Activated T-helper 1 cell treated with anti-CD3 and anti-CD28 coated beads, Interleukin-12 subunit alpha, Interleukin-12 subunit beta, Interleukin-2, Interleukin-4 antibody, amounts not matched to agents 30 ng/mL and 10 ng/mL and 1 ng/mL, durations not matched to agents 14 hours and 24 hours and 36 hours (primary cell): ENCODE measurements at regions of chr14 and their contacts with region 1.

Region 1: GRCh38 chr14:22002860-22003309 is 329.3 kb upstream of the OR4E1 start:
- DNase-seq: peak; percentile 63
- H3K4me3 Mint-ChIP-seq: peak overlapping the region; percentile 80
- H3K27ac Mint-ChIP-seq: peak overlapping the region; percentile 85
- H3K4me1 Mint-ChIP-seq: peaks cover 25% of the 10 kb centered on the region
- H3K27me3 Mint-ChIP-seq: no peaks in the 10 kb centered on the region

Region 2: DNA sequence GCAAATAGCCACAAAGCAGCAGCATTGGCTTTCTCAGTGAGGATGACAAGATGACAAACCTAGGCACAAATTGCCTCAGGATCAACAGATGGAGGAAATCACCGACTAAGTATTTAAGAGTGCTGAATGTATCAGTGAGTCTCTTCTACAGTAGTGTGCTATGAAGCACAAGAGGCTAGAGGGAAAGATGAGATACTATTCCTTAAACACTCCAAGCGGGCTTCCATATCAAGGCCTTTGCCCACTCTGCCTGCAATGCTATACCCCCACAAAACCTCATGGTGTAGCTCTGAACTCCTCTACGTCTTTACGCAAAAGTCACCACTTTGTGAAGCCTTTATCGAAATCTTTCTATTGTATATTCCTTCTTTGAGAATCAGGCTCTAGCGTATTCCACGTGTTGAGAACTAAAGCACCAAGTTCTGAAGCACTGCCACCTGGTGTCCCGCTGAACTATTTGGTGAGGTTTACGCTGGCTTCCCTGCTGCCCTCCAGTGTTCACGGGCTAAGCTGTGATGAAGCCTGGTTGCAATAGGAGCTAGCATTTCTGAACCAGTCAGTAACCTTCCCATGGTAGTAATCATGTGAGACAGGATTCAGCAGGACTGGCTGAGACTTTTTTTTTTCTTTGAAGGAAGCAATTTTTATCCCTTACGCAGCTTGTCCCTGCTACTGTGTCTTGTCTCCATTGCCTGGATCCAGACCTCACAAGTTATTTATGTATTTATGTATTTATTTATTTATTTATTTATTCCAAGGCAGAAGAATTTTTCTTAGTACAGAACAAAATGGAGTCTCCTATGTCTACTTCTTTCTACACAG is 97.3 kb after region 1 on chr14:
- intact Hi-C with region 1: loop called (anchors 5 kb)
- DNase-seq: peak; percentile 39
- H3K4me3 Mint-ChIP-seq: no peak overlapping the region
- H3K27ac Mint-ChIP-seq: peak overlapping the region; percentile 12
- H3K4me1 Mint-ChIP-seq: peaks cover 53% of the 10 kb centered on the region
- H3K27me3 Mint-ChIP-seq: no peaks in the 10 kb centered on the region